ENCODE measurements at regions of chr2 and their contacts with region 1.

Region 1: GRCh38 chr2:160893581-160893980 is 266.6 kb upstream of the TANK start:
- DNase-seq: no peak
- H3K4me3 ChIP-seq: no peak overlapping the region
- CTCF ChIP-seq: no peak

Region 2: DNA sequence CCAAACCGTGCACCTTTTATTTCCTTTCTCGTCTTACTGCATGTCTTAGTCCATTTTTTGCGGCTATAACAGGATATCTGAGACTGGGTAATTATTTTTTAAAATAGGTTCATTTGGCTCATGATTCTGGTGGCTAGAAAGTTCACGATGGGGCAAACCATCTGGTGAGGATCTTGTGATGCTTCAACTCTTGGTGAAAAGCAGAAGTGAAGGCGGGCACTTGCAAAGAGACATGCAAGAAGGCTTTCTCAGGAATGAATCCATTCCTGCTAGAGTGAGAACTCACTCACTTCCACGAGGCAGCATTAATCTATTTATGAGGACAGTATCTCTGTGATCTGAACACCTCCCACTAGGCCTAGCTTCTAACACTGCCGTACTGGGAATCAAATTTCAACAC is 72.9 kb before region 1 on chr2:
- in situ Hi-C with region 1: loop called (anchors 5 kb)
- DNase-seq: no peak
- H3K4me3 ChIP-seq: no peak overlapping the region
- CTCF ChIP-seq: no peak